ENCODE measurements at regions of chr18 and their contacts with region 1.

Region 1: DNA sequence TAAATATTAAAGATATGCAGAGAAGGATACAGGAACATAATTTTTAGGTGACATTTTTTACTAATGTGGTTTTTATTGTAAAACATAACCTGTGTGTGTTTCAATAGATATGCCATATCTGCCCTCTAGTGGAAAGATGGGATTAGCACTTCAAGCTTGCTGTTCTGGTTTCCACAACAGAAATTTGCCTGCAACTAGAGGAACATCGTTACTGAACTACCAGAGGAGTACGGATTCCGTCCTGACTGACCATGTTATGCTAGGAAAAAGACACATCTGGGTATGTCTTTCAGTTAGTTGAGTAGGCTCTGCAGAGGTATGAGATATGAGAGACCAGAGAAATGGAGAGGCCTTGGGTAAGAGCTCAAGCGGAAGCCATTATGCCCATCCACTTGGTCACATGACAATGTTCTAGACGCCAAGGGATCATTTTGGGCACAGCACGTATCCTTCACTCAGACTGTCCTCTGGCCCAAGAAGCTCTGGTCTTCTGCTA is 104.9 kb downstream of the MBD2 start:
- DNase-seq: no peak
- ATAC-seq: peak in 3 of 4 donors; percentile 37 to 78 (median 55)
- H3K4me3 ChIP-seq: no peak overlapping the region
- H3K27ac ChIP-seq: no peak overlapping the region
- H3K4me1 ChIP-seq: no peaks in the 10 kb centered on the region
- H3K27me3 ChIP-seq: no peaks in the 10 kb centered on the region
- CTCF ChIP-seq: peak; percentile 75

Region 2: DNA sequence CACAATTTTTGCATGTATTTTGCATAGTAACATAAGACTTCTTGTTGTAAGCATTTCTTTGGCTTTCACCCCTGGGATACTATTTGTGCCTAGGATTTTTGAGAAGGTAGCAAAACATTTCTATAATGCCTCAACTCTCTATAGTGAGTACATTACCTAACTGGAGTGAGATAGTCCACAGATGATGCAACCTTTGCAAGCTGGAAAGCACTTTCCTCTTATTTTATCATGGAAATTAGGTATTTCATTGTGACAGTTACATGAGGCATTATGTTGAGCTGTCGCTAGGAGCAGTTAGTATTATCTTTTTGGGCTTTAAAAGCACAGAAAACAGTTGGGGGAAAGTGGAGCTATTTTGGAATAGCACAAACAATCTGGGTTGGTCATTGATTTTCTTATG is 993.4 kb before region 1 on chr18:
- intact Hi-C with region 1: no loop called
- DNase-seq: no peak
- ATAC-seq: no peak
- H3K4me3 ChIP-seq: no peak overlapping the region
- H3K27ac ChIP-seq: no peak overlapping the region
- H3K4me1 ChIP-seq: no peaks in the 10 kb centered on the region
- H3K27me3 ChIP-seq: no peaks in the 10 kb centered on the region
- CTCF ChIP-seq: no peak

Region 3: DNA sequence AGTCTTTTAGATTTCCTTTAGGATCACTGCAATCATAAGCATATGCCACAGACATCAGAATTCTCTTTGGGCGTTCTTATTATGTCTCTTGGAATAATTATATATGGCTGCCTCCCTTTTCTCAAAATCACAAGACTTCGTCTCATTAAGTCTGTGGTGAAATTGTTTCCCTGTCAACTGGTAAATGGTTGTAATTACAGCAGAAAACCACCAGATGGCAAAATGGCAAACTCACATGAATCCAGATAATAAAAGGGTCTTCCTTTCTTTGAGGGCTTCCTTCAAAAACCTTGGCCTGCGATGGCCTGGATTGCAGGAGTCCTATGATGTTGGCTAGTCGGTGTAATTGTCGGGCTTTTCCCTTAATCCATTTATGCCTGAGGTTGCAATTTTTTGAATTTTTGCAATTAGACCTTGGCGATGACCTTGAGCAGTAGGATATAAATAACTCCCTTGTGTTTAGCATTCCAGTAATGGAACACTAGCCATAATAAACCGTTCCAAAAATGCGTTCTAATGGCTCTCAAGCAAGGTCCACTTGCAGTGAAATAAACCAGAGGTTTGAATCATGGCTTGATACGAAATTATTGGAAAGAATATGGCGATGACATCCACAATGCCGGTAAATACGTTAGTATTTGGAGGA is 551.5 kb before region 1 on chr18:
- intact Hi-C with region 1: loop called (anchors 10 kb)
- DNase-seq: no peak
- ATAC-seq: no peak
- H3K4me3 ChIP-seq: no peak overlapping the region
- H3K27ac ChIP-seq: no peak overlapping the region
- H3K4me1 ChIP-seq: no peaks in the 10 kb centered on the region
- H3K27me3 ChIP-seq: peaks cover 0 to under 1% (median 0%) of the 10 kb centered on the region in 3 donors
- CTCF ChIP-seq: peak; percentile 41

Region 4: DNA sequence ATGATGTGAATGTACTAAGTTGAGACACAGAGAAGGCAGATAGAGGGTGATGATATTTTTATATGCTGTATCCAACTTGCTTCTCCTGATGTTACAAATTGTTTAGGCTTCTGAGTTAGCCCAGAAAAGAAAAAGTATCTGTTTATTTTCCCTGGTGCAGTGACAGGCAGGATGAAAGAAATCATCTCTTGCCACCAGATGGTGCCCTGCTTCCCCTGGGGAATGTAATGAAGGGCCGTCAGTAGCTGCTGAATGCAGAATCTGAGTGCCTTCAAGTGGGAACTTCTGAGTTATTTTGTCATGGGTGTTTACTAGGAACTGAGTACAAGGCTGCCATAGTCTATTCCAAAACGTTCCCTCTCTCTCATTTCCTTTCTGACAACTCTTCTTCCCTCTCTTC is 420.7 kb before region 1 on chr18:
- intact Hi-C with region 1: loop called (anchors 2 to 5 kb)
- DNase-seq: no peak
- ATAC-seq: no peak
- H3K4me3 ChIP-seq: no peak overlapping the region
- H3K27ac ChIP-seq: no peak overlapping the region
- H3K4me1 ChIP-seq: no peaks in the 10 kb centered on the region
- H3K27me3 ChIP-seq: no peaks in the 10 kb centered on the region
- CTCF ChIP-seq: peak; percentile 35

Region 5: DNA sequence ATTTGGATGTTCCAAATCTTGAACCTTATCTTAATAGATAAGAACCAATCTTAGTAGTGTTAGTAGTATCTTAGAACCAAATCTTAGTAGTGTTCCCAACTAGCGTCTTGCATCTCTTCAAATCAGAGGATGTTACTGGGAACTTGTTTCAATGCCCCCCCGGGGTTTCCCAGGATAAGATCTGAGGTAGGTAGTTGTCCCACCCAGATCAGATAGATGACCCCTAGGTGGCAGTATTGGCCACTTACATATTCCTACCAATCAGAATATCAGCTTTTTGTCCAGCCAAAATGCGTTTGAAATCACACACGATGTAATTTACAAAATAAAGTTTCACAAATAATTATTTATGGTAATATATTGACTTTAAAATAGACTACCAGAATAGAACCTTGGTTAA is 209.9 kb before region 1 on chr18:
- intact Hi-C with region 1: loop called in 1 of 2 experiments (anchors 10 kb)
- DNase-seq: no peak
- ATAC-seq: no peak
- H3K4me3 ChIP-seq: no peak overlapping the region
- H3K27ac ChIP-seq: no peak overlapping the region
- H3K4me1 ChIP-seq: no peaks in the 10 kb centered on the region
- H3K27me3 ChIP-seq: no peaks in the 10 kb centered on the region
- CTCF ChIP-seq: peak; percentile 33

Region 6: DNA sequence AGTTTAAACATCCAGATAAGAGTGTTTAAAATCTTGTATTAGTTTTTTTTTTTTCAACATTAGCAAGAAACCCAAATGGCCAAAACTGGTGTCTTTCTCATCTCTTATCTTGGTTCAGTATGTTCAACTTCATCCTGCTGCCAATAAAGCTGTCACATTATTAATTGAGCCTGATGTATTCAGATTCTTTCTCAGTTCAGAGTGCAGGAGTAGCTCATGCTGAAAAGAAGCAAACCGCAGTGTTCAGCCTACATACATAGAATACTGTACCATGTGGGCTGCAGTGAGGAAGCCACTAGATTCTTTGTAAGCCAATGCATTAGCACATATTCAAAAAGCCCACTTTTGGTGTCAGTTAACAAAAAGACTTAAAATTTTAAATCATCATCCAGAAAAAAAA is 314.3 kb after region 1 on chr18:
- intact Hi-C with region 1: no loop called
- DNase-seq: no peak
- ATAC-seq: no peak
- H3K4me3 ChIP-seq: no peak overlapping the region
- H3K27ac ChIP-seq: no peak overlapping the region
- H3K4me1 ChIP-seq: no peaks in the 10 kb centered on the region
- H3K27me3 ChIP-seq: peaks cover 0 to 3% (median 2%) of the 10 kb centered on the region in 3 donors
- CTCF ChIP-seq: no peak

Measured in psoas muscle (tissue), 8 donors.